HCT116 (cell line): ENCODE measurements at regions of chr10 and their contacts with region 1.

Region 1: DNA sequence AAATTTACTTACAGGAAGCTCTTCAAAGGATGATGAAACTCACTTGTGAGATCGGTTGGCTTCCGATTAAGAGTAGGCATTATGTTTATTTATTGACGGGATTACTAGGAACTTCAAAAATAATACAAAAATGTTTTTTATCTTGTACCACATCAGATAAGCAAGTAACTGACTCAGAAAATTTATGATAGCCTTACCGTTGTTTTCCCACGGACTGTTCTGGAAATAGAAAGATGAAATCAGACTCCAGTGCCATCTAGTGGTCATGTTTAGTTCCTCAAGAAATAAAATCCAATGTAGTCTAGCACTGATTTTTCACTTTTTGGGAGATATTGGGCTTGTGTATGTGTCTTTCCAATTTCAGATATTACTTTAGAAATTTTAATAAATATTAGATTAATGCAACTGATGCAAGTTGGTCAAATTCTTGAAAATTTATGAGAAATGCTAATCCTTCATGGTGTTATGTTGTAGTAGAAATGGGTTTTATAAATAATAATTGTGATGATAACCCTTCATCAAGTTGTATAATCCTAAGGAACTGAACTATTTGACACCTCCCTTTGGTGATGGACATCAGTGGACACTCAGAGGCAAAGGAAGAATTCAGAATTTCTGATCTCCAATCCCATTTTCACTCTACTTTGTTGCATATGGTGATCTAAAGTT is 168.8 kb downstream of the TMEM26 start:
- DNase-seq: peak; percentile 34
- ATAC-seq: peak; percentile 60
- H3K4me3 ChIP-seq: no peak overlapping the region
- H3K27ac ChIP-seq: no peak overlapping the region
- H3K4me1 ChIP-seq: peaks cover 0 to 7% of the 10 kb centered on the region in 2 experiments; a peak in 2 of 4 replicates
- H3K27me3 ChIP-seq: no peaks in the 10 kb centered on the region
- CTCF ChIP-seq: peak; percentile 57 to 66 (median 65); a peak in 5 of 6 replicates
- POLR2A ChIP-seq: no peak
- RAD21 ChIP-seq: peak; percentile 70

Region 2: GRCh38 chr10:60444494-60445064 is 839.8 kb before region 1 on chr10:
- CTCF ChIA-PET with region 1: no interaction called
- POLR2A ChIA-PET with region 1: no interaction called
- RAD21 ChIA-PET with region 1: no interaction called
- intact Hi-C with region 1: loop called (anchors 10 kb)
- DNase-seq: peak; percentile 18
- ATAC-seq: no peak
- H3K4me3 ChIP-seq: no peak overlapping the region
- H3K27ac ChIP-seq: no peak overlapping the region
- H3K4me1 ChIP-seq: no peaks in the 10 kb centered on the region; a peak in 1 of 4 replicates
- H3K27me3 ChIP-seq: no peaks in the 10 kb centered on the region
- CTCF ChIP-seq: peak; percentile 36 to 70 (median 66); a peak in 4 of 6 replicates
- POLR2A ChIP-seq: no peak
- RAD21 ChIP-seq: peak; percentile 75

Region 3: DNA sequence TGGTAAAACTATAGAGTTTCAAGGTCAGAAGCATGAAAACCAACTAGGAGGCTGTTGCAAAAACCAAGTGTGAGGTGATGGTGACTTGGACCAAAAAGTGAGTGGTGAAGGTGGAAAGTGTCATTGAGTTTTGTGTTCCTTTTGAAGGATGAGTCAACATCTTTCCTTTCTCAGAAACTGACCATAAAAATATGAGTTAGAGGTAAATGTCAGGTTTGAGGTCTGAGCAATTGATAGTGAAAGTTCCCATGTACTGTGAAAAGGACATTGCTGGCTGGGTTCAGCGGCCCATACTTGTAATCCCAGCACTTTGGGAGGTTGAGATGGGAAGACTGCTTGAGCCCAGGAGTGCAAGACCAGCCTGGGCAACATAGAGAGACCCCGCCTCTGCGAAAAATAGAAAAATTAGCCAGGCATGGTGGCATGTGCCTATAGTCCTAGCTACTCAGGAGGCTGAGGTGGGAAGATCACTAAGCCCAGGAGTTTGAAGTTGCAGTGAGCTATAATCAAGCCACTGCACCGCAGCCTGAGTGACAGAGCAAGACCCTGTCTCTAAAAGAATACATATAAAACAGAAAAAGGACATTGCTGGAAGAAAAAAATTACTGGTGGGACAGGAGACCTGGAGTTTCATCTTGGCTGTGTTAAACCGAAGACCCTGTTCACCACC is 527.8 kb after region 1 on chr10:
- CTCF ChIA-PET with region 1: no interaction called
- POLR2A ChIA-PET with region 1: no interaction called
- RAD21 ChIA-PET with region 1: no interaction called
- intact Hi-C with region 1: loop called (anchors 10 kb)
- DNase-seq: no peak
- ATAC-seq: no peak
- H3K4me3 ChIP-seq: no peak overlapping the region
- H3K27ac ChIP-seq: no peak overlapping the region
- H3K4me1 ChIP-seq: no peaks in the 10 kb centered on the region
- H3K27me3 ChIP-seq: no peaks in the 10 kb centered on the region
- CTCF ChIP-seq: no peak
- POLR2A ChIP-seq: no peak
- RAD21 ChIP-seq: no peak